Activated naive CD4-positive, alpha-beta T cell treated with anti-CD3 and anti-CD28 coated beads for 36 hours (primary cell): ENCODE measurements at regions of chr7 and their contacts with region 1.

Region 1: GRCh38 chr7:108613112-108613759 is 43.6 kb downstream of the DNAJB9 start:
- DNase-seq: no peak
- H3K4me3 Mint-ChIP-seq: no peak overlapping the region
- H3K27ac Mint-ChIP-seq: no peak overlapping the region
- H3K4me1 Mint-ChIP-seq: no peaks in the 10 kb centered on the region
- H3K27me3 Mint-ChIP-seq: no peaks in the 10 kb centered on the region

Region 2: DNA sequence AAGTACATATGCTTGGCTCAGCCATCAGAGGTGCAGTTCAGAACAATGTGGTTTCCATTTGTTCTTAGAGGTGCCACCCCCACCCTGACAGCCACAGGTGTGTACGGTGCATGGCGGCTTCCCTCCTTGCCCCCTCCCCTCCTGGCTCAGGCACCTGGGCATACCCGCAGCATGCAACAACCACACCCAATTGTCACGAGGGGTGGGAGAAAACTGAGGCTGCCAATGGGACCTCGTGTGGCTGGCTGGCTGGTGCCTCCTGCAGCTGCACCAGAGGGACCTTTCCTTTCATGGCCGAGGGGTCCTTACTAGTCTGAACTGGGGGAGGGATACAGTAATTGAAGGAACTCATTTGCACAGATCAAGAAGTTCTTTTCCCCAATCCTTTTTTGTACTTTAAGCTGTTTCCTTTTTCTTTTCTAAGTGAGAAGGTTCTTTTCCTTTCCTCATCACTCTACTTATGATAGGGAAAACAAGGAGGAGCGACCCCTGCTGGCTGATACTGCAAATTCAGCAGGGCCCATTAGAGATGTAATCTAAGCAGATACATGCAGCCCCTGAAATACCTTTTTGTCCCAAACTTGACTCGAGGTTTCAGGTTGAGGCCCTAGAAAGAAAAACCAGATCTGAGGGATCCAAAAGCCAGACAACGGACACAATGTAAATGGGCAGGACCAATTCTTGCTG is 261.8 kb after region 1 on chr7:
- CTCF ChIA-PET with region 1: no interaction called
- intact Hi-C with region 1: loop called (anchors 2 kb)
- DNase-seq: peak; percentile 28
- H3K4me3 Mint-ChIP-seq: no peak overlapping the region
- H3K27ac Mint-ChIP-seq: no peak overlapping the region
- H3K4me1 Mint-ChIP-seq: no peaks in the 10 kb centered on the region
- H3K27me3 Mint-ChIP-seq: no peaks in the 10 kb centered on the region

Region 3: DNA sequence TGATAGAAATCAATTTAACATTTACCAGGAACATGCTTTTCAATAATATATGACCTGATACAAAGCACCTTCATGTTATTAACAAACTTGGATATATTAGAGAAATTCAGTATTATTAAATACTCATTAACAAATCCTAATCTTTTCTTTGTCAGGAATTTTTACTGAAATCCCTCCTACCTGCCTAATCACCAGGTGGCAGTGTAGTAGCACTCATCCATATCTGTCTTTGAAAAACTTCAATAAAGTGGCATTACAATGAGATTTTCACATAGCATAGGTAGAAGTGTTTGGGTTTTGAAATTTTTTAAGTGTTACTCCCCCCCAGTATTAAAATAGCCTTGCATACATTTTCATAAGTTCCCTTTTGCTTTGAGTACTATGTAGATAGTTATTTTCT is 1231.1 kb after region 1 on chr7:
- CTCF ChIA-PET with region 1: no interaction called
- intact Hi-C with region 1: loop called (anchors 10 kb)
- DNase-seq: peak; percentile 18
- H3K4me3 Mint-ChIP-seq: no peak overlapping the region
- H3K27ac Mint-ChIP-seq: no peak overlapping the region
- H3K4me1 Mint-ChIP-seq: no peaks in the 10 kb centered on the region
- H3K27me3 Mint-ChIP-seq: peaks cover 10% of the 10 kb centered on the region

Region 4: DNA sequence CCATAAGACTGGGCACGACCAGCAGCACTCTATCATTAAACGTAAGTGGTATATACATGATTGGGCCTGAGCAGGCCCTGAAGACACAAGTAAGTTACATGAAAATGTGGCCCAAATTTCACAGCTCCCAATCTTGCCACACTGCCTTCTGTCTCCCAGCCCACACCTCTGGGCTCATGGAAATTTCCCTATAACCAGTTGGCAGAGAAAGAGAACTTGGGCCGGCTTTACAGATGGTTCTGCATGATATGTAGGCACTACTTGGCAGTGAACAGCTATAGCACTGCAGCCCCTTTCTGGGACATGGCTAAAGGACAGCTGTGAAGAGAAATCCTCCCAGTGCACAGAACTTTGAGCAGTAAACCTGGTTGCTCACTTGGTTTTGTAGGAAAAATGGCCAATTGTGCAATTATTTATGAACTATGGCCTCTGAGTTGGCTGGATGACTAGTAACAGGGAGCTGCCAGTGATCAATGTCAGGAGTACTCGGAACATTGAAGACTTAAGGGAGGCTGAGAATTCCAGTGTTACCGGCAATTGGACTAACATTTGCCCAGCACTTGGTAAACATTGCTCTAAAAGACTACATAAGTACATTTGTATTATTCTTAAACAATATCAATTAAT is 1471.1 kb after region 1 on chr7:
- CTCF ChIA-PET with region 1: no interaction called
- intact Hi-C with region 1: loop called (anchors 10 kb)
- DNase-seq: no peak
- H3K4me3 Mint-ChIP-seq: no peak overlapping the region
- H3K27ac Mint-ChIP-seq: no peak overlapping the region
- H3K4me1 Mint-ChIP-seq: no peaks in the 10 kb centered on the region
- H3K27me3 Mint-ChIP-seq: no peaks in the 10 kb centered on the region